ENCODE measurements at regions of chr1 and their contacts with region 1.

Region 1: GRCh38 chr1:150561974-150562445 is 12.8 kb downstream of the ADAMTSL4 start:
- DNase-seq: peak; percentile 90
- ATAC-seq: peak; percentile 37
- H3K4me3 ChIP-seq: peak overlapping the region; percentile 63 to 89 (median 80)
- H3K4me3 Mint-ChIP-seq: peak overlapping the region; percentile 99
- H3K27ac ChIP-seq: peak overlapping the region; percentile 96 to 99
- H3K27ac Mint-ChIP-seq: peak overlapping the region; percentile 98
- H3K4me1 ChIP-seq: peaks cover 55 to 68% of the 10 kb centered on the region in 2 donors
- H3K4me1 Mint-ChIP-seq: peaks cover 59% of the 10 kb centered on the region
- H3K27me3 ChIP-seq: no peaks in the 10 kb centered on the region
- H3K27me3 Mint-ChIP-seq: no peaks in the 10 kb centered on the region
- CTCF ChIP-seq: no peak

Region 2: DNA sequence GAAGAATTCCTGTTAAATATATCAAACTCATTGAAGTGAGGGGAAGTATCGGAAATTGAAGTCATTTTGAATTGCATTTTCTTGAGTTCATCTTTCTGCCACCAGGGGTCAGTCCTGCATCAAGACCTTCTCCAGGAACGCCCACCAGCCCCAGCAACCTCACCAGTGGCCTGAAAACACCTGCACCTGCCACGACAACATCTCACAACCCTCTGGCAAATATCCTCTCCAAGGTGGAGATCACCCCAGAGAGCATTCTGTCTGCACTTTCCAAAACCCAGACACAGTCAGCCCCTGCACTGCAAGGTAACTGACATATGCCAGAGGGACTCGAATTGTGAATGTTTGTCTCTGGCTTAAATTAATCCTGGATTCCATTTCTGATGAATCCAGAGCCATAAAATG is 97.6 kb before region 1 on chr1:
- CTCF ChIA-PET with region 1: interaction called, 13 read pairs
- POLR2A ChIA-PET with region 1: no interaction called
- intact Hi-C with region 1: loop called (anchors 1 kb)
- DNase-seq: peak; percentile 83
- ATAC-seq: peak; percentile 74
- H3K4me3 ChIP-seq: no peak overlapping the region
- H3K4me3 Mint-ChIP-seq: no peak overlapping the region
- H3K27ac ChIP-seq: no peak overlapping the region
- H3K27ac Mint-ChIP-seq: peak overlapping the region; percentile 5
- H3K4me1 ChIP-seq: peaks cover 0 to 3% of the 10 kb centered on the region in 2 donors
- H3K4me1 Mint-ChIP-seq: peaks cover 4% of the 10 kb centered on the region
- H3K27me3 ChIP-seq: no peaks in the 10 kb centered on the region
- H3K27me3 Mint-ChIP-seq: no peaks in the 10 kb centered on the region
- CTCF ChIP-seq: peak; percentile 82

Region 3: DNA sequence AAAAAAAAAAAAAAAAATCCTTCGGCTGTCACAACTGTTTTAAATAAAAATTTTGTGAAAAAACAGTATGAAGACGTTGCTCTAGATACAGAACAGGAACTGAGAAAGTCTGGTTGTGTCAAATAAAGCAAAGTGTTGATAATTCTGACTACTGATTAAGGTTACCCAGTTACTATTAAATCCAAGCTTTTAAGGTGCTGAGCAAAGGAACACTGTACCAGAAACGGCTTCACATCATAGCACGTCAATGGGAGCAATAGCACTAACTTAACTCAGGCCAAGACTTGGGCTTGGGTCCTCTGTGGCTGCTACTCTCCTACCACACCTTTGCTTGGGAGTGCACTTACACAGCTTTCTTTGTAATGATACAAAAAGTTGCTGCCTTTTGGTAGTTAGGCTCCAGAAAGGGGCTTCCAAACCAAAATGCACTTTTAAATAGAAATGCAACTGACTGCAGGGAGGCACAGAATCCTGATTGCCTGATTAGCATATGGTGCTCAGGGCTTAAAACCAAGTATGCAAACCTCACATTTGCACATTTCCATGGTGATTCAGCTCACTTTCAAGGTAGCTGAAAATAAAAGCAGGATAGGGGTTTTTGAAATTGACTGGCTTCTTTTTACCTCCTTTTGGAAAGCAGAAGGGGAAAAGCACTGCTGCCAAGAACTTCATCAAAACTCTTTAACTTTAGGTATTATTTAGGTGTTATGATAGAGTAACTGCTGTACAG is 11.1 kb after region 1 on chr1:
- CTCF ChIA-PET with region 1: interaction called, 497 read pairs
- POLR2A ChIA-PET with region 1: interaction called, 371 read pairs
- intact Hi-C with region 1: loop called (anchors 1 kb)
- DNase-seq: peak; percentile 56
- ATAC-seq: peak; percentile 61
- H3K4me3 ChIP-seq: peak overlapping the region; percentile 12 to 51 (median 25)
- H3K4me3 Mint-ChIP-seq: peak overlapping the region; percentile 74
- H3K27ac ChIP-seq: peak overlapping the region; percentile 66 to 99
- H3K27ac Mint-ChIP-seq: peak overlapping the region; percentile 79
- H3K4me1 ChIP-seq: peaks cover 80 to 86% of the 10 kb centered on the region in 2 donors
- H3K4me1 Mint-ChIP-seq: peaks cover 79% of the 10 kb centered on the region
- H3K27me3 ChIP-seq: no peaks in the 10 kb centered on the region
- H3K27me3 Mint-ChIP-seq: no peaks in the 10 kb centered on the region
- CTCF ChIP-seq: no peak

Region 4: GRCh38 chr1:150613061-150613920 is 51.3 kb after region 1 on chr1:
- CTCF ChIA-PET with region 1: interaction called, 661 read pairs
- POLR2A ChIA-PET with region 1: interaction called, 22 read pairs
- intact Hi-C with region 1: loop called (anchors 1 kb)
- DNase-seq: peak; percentile 74
- ATAC-seq: peak; percentile 55
- H3K4me3 ChIP-seq: no peak overlapping the region
- H3K4me3 Mint-ChIP-seq: peak overlapping the region; percentile 72
- H3K27ac ChIP-seq: peak overlapping the region; percentile 44 to 95
- H3K27ac Mint-ChIP-seq: peak overlapping the region; percentile 92
- H3K4me1 ChIP-seq: peaks cover 35 to 41% of the 10 kb centered on the region in 2 donors
- H3K4me1 Mint-ChIP-seq: peaks cover 44% of the 10 kb centered on the region
- H3K27me3 ChIP-seq: no peaks in the 10 kb centered on the region
- H3K27me3 Mint-ChIP-seq: no peaks in the 10 kb centered on the region
- CTCF ChIP-seq: no peak

Region 5: DNA sequence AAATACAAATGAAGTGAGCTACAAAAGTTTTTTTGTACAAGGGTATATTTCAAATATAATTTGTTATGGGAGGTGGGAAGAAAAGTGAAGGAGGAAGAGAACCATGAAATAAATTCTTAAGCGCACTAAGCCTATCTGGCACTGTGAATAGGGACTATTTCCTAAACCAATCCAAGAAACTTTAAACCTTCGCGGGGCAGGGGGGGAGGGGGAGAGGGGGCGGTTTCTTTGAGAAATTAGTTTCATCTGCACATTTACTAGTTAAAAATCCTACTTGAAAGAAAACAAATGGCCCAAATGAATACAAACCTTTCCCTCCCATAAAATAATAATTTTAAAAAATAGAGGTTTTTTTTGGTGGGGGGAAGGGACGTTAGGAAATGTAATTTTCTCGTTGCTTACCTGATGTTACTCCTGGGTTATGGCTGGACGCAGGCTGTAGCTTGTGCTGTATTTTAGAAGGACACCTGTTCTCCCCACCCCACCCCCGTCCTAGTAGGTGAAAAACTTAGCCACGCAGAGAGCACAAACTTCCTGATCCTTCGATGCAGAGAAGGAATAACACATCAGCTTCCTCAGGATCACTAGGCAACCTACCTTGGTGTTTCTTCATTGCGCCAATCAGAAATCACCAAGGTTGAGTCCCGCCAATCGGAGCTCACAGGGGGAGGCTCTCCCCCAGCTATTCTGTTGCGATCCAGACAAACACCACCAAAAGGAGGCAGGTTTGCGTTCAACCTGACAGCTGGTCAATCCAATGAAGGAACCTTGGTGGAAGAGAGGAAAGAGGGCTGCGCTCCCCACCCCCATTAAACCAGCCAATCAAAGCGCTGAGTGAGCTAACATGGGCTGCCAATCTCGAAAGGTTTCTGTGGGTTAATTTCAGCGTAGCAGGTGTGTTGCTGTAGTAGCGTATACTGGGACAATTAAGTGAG is 134.8 kb after region 1 on chr1 and contains the start of gene GOLPH3L:
- CTCF ChIA-PET with region 1: interaction called, 12 read pairs
- POLR2A ChIA-PET with region 1: no interaction called
- intact Hi-C with region 1: loop called (anchors 1 kb)
- DNase-seq: peak; percentile 93
- ATAC-seq: peak; percentile 99
- H3K4me3 ChIP-seq: peak within 1 kb of the TSS; percentile 77 to 99 (median 90)
- H3K4me3 Mint-ChIP-seq: peak within 1 kb of the TSS; percentile 100
- H3K27ac ChIP-seq: peak within 1 kb of the TSS; percentile 66 to 78
- H3K27ac Mint-ChIP-seq: peak within 1 kb of the TSS; percentile 97
- H3K4me1 ChIP-seq: peaks cover 4 to 11% of the 10 kb centered on the region in 2 donors
- H3K4me1 Mint-ChIP-seq: peaks cover 19% of the 10 kb centered on the region
- H3K27me3 ChIP-seq: no peaks in the 10 kb centered on the region
- H3K27me3 Mint-ChIP-seq: no peaks in the 10 kb centered on the region
- CTCF ChIP-seq: no peak
- total RNA-seq, gene GOLPH3L: 22.1 and 25.3 TPM in 2 replicates

Region 6: DNA sequence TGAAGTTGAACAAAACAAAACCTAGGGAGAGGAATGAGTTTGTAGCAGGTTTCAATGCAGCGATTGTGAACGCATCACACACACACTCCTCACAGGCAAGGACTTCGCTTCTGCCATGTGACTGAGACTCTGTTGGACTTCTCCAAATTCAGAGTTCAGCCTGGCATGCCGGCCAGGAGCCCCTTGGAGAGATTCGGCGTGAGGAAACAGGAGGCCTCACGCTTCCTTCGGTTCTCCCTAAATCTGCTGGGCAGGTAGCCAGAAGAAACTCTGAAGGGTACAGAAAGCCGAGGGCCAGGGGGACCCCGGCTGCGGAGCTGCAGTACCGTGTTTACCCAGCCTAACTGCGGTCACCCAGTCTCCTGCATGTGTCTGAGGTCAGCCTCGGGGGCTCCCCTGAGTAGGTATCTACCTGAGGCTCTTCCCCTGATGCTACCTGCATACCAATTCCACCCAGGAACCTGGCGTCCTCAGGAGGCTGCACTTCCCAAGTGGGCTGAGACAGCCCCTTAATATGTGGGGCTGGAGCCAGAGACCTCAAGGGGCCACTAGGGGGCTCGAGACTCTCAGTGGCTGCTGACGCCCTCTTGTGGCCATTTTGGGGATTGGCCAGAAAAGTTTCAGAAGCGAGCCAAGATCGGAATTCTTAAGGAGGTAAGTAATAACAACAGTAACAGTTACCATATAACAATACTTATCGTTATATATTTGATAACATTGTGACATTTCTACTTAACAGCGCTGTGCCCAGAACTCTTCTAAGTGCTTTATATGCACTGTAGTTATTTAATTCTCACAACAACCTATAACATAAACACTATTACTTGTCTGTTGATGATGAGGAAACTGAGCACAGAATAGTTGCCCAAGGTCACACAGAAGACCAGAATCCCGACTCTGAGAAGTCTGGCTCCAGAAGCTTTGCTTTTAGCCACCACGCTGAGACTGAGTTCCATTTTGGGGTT is 417.4 kb after region 1 on chr1:
- CTCF ChIA-PET with region 1: no interaction called
- POLR2A ChIA-PET with region 1: no interaction called
- intact Hi-C with region 1: loop called (anchors 2 kb)
- DNase-seq: peak; percentile 92
- ATAC-seq: peak; percentile 56
- H3K4me3 ChIP-seq: peak overlapping the region; percentile 38 to 72 (median 50)
- H3K4me3 Mint-ChIP-seq: peak overlapping the region; percentile 79
- H3K27ac ChIP-seq: no peak overlapping the region
- H3K27ac Mint-ChIP-seq: peak overlapping the region; percentile 88
- H3K4me1 ChIP-seq: peaks cover 22 to 35% of the 10 kb centered on the region in 2 donors
- H3K4me1 Mint-ChIP-seq: peaks cover 31% of the 10 kb centered on the region
- H3K27me3 ChIP-seq: no peaks in the 10 kb centered on the region
- H3K27me3 Mint-ChIP-seq: no peaks in the 10 kb centered on the region
- CTCF ChIP-seq: peak; percentile 100

Measured in B cell (primary cell).